A673 (cell line): ENCODE measurements at regions of chr11 and their contacts with region 1.

Region 1: GRCh38 chr11:79062814-79063762 is 377.7 kb downstream of the TENM4 start:
- DNase-seq: peak; percentile 45
- H3K4me3 ChIP-seq: no peak overlapping the region
- H3K27ac ChIP-seq: no peak overlapping the region
- H3K4me1 ChIP-seq: no peaks in the 10 kb centered on the region
- H3K27me3 ChIP-seq: no peaks in the 10 kb centered on the region
- CTCF ChIP-seq: peak; percentile 49

Region 2: DNA sequence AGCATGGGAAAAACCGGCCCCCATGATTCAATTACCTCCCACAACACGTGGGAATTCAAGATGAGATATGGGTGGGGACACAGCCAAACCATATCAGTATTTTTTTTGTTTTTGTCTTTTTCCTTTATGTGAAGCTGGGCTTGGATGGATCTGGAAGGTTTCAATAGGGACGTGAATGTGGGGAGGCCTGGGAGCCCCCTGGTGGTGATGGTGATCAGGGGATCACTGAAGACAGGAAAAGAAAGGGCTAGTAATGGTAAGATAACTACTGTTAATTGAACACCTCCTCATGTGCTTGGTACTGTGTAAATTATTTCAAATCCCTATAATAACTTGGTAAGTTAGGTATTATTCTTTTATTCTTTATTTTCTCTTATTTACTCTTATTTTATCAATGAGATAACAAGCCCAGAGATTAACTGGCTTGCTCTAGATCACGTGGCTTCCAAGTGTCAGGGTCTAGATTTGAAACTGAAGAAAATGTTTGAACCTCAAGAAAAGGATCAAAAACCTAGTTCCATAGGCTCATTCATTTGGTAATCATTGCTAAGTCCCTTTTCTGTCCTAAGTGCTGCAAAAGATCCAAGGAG is 13.5 kb after region 1 on chr11:
- CTCF ChIA-PET with region 1: no interaction called
- POLR2A ChIA-PET with region 1: no interaction called
- intact Hi-C with region 1: no loop called
- DNase-seq: peak; percentile 61
- H3K4me3 ChIP-seq: no peak overlapping the region
- H3K27ac ChIP-seq: no peak overlapping the region
- H3K4me1 ChIP-seq: no peaks in the 10 kb centered on the region
- H3K27me3 ChIP-seq: no peaks in the 10 kb centered on the region
- CTCF ChIP-seq: peak; percentile 81

Region 3: GRCh38 chr11:79400717-79401686 is 337.9 kb after region 1 on chr11:
- CTCF ChIA-PET with region 1: interaction called, 17 read pairs
- POLR2A ChIA-PET with region 1: no interaction called
- intact Hi-C with region 1: no loop called
- DNase-seq: peak; percentile 36
- H3K4me3 ChIP-seq: no peak overlapping the region
- H3K27ac ChIP-seq: no peak overlapping the region
- H3K4me1 ChIP-seq: no peaks in the 10 kb centered on the region
- H3K27me3 ChIP-seq: no peaks in the 10 kb centered on the region
- CTCF ChIP-seq: peak; percentile 69